Activated CD4-positive, alpha-beta memory T cell treated with anti-CD3 and anti-CD28 coated beads, Interleukin-2, amount 10 ng/mL, durations not matched to agents 7 days and 5 days (primary cell): ENCODE measurements at regions of chr6 and their contacts with region 1.

Region 1: GRCh38 chr6:52389626-52390360 is 27.8 kb downstream of the PAQR8 start:
- DNase-seq: peak; percentile 61
- H3K4me3 Mint-ChIP-seq: peak overlapping the region; percentile 44
- H3K27ac Mint-ChIP-seq: peak overlapping the region; percentile 92
- H3K4me1 Mint-ChIP-seq: peaks cover 67% of the 10 kb centered on the region
- H3K27me3 Mint-ChIP-seq: no peaks in the 10 kb centered on the region

Region 2: GRCh38 chr6:52304983-52305390 is 84.8 kb before region 1 on chr6:
- CTCF ChIA-PET with region 1: interaction called, 5 read pairs
- POLR2A ChIA-PET with region 1: interaction called, 15 read pairs
- DNase-seq: no peak
- H3K4me3 Mint-ChIP-seq: peak overlapping the region; percentile 24
- H3K27ac Mint-ChIP-seq: peak overlapping the region; percentile 67
- H3K4me1 Mint-ChIP-seq: peaks cover 52% of the 10 kb centered on the region
- H3K27me3 Mint-ChIP-seq: no peaks in the 10 kb centered on the region